ENCODE measurements at regions of chr12 and their contacts with region 1.

Region 1: GRCh38 chr12:11581179-11581755 is 68.2 kb upstream of the ETV6 start:
- DNase-seq: peak in 4 of 5 donors; percentile 48 to 89 (median 72)
- H3K4me3 ChIP-seq: no peak overlapping the region
- H3K27ac ChIP-seq: no peak overlapping the region
- H3K4me1 ChIP-seq: no peaks in the 10 kb centered on the region
- H3K27me3 ChIP-seq: no peaks in the 10 kb centered on the region
- CTCF ChIP-seq: peak; percentile 54

Region 2: DNA sequence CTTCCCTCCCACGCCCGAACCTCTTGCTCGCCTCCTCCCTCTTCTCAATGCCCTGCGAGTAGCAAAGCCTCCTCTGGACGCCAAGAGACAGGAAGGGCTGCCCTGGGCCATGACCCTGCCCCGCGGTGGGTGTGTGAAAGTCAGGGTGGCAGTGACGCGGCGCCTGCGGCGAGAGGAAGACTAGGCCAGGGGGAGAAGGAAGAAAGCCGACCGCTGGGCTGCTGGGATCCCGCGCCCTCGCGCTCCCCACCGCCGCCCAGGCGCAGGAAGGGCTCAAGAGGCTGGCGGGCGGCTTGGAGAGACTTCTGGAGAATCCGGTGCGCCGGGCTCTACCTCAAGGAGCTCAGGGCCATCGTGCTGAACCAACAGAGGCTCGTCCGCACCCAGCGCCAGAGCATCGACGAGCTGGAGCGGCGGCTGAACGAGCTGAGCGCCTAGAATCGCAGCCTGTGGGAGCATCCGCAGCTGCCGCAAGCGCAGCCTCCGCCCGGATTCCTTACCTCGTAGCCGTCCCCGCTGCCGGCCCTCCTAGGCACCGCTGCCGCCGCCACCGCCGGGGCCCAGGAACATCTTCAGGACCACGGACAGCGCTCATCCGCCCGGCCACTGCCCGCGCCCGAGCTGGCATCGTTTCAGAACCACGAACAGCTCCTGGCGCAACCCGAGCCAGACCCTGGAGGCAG is 80.9 kb before region 1 on chr12:
- intact Hi-C with region 1: no loop called
- DNase-seq: peak; percentile 94 to 95 (median 94)
- H3K4me3 ChIP-seq: no peak overlapping the region
- H3K27ac ChIP-seq: no peak overlapping the region
- H3K4me1 ChIP-seq: peaks cover 0 to 3% (median 0%) of the 10 kb centered on the region in 3 donors
- H3K27me3 ChIP-seq: no peaks in the 10 kb centered on the region
- CTCF ChIP-seq: no peak

Region 3: DNA sequence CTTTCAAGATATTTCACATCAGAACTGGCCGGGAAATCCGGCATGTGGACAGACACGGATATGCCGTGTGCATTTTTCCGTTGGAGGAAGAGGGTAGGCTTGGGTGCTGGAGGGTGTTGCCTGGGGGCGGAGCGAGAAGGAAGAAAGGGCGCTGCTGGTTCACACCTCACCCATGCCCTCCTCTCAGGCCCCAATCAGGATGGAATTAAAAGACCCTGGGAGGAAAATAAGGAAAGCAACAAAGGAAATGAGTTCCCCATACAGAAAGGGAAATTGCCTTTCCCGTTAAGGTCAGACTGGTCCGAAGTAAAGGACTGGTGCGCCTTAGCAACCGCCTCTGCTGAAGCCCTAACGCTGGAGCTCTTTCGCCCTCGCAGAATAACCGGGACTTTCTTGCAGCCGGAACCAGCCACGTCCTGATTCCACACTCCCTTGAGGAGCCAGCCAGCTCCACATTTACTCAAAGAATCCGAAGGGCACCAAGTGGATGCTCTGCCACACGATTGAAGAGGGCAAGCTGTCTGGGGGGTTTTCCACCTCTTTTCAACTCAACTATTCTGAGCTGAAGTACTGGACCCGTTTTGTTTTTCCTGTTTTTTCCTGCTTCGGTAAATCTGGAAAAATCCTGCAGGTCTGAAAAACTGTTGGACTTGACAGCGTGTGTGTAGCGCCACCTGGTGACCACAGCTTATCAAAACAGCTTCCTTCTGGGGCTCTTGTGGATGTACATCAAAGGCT is 451.8 kb after region 1 on chr12:
- intact Hi-C with region 1: loop called (anchors 5 kb)
- DNase-seq: peak; percentile 86 to 94 (median 91)
- H3K4me3 ChIP-seq: peak overlapping the region; percentile 56 to 70 (median 60)
- H3K27ac ChIP-seq: peak overlapping the region in 1 of 2 donors; percentile 80
- H3K4me1 ChIP-seq: peaks cover 0 to 5% (median 0%) of the 10 kb centered on the region in 3 donors
- H3K27me3 ChIP-seq: no peaks in the 10 kb centered on the region
- CTCF ChIP-seq: peak; percentile 92

Region 4: DNA sequence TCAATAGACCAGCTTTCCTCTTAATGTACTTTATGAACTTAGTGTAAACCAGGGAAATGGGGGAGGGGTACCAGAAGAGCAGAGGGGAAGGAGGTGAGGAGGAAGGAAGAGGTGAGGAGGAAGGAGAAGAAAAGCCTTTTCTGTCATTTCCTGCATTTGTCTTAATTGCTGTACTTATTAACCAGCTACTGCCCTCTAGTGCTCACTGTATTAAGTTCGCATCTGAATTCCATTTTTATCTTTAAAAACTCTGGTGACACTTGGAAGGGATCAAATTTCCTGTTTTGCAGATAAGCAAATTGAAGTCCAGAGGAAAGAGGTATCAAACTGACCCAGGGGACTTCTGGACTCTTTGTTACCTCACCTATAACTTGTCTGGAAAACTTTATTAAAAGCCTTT is 746.5 kb after region 1 on chr12:
- intact Hi-C with region 1: loop called (anchors 10 kb)
- DNase-seq: peak in 2 of 5 donors; percentile 76 to 85
- H3K4me3 ChIP-seq: no peak overlapping the region
- H3K27ac ChIP-seq: no peak overlapping the region
- H3K4me1 ChIP-seq: peaks cover 5 to 8% (median 6%) of the 10 kb centered on the region in 3 donors
- H3K27me3 ChIP-seq: no peaks in the 10 kb centered on the region
- CTCF ChIP-seq: peak; percentile 69

Measured in kidney (tissue), 22 donors.